ENCODE measurements at regions of chr12 and their contacts with region 1.

Region 1: GRCh38 chr12:108664338-108665258 is 30.9 kb upstream of the SELPLG start:
- DNase-seq: peak; percentile 93
- ATAC-seq: peak; percentile 100
- H3K4me3 Mint-ChIP-seq: no peak overlapping the region
- H3K27ac Mint-ChIP-seq: peak overlapping the region; percentile 82
- H3K4me1 Mint-ChIP-seq: peaks cover 19% of the 10 kb centered on the region
- H3K27me3 Mint-ChIP-seq: no peaks in the 10 kb centered on the region

Region 2: DNA sequence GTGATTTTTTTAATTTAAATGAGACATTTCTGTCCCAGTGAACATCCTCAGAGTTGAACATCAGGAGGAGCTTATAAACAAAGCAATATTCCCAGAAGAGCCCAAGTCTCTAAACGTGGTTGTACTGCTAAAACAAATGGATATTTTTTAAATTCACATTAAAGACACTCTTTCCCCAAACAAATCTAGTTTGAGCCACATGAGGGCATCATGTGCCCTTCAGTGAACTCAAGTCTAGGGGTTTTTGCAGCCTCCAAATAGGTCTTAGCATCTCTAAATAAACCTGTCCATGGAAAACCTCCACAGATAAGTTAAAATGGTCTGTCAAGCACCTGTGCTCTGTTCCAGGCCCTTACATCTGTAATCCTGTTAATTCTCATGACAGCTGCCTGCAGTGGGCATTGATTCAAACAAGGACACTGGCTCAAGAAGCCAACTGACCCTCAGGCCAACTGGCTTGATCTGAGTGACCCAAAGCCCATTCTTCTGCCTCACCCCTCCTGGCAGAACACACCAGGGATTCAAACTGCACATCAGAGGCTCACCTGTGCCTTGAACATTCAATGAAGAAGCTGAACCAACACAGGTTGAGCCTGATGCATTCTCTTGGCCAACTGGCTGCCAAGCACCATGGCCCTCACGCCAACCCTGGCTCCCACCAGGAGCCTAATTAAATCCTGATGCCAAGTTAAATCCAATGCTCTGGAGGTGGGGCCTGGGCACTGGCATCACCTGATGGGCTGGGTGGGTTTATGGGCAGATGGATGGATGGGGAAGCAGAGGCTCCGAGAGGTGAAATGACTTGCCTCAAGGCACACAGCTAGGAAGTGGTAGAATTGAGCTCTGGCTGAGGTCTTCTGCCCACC is 93.6 kb before region 1 on chr12:
- CTCF ChIA-PET with region 1: interaction called, 18 read pairs
- DNase-seq: no peak
- ATAC-seq: no peak
- H3K4me3 Mint-ChIP-seq: no peak overlapping the region
- H3K27ac Mint-ChIP-seq: no peak overlapping the region
- H3K4me1 Mint-ChIP-seq: peaks cover 85% of the 10 kb centered on the region
- H3K27me3 Mint-ChIP-seq: peaks cover 3% of the 10 kb centered on the region

Region 3: DNA sequence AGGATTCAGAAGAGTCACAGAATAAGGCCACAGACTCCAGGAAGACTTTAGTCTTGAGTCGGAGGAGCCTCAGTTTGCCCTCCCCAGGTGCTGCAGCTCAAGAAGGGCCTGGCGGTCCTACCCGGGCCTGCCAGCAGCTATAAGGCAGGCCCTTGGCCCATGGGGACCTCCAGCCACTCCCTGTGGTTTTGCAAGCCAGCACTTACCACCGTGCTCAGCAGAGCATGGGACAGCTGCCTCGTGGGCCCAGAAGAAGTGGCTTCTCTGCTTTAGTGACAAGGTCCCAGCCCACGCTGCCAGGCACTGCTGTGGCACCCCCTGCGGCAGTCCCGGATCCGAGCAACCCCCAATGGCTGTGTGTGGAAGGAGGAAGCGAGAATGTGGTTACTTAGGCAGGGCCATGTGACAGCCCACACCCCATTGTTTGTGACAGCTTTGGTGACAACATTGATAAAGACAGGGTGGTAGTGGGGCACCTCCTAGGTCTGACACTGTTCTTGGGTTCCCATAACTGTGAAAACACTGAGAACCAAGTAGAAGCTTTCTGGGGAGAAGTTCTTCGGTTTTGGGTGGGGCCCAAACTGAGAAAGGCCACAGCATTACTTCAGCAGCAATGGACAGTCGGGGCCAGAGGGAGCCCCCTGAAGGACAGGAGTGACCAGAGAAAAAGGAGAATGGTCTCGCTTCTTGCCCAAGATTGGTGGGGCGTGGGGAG is 30.9 kb before region 1 on chr12 and contains the start of gene SELPLG:
- CTCF ChIA-PET with region 1: interaction called, 37 read pairs
- DNase-seq: peak; percentile 95
- ATAC-seq: peak; percentile 53
- H3K4me3 Mint-ChIP-seq: peak within 1 kb of the TSS; percentile 100
- H3K27ac Mint-ChIP-seq: peak within 1 kb of the TSS; percentile 100
- H3K4me1 Mint-ChIP-seq: peaks cover 59% of the 10 kb centered on the region
- H3K27me3 Mint-ChIP-seq: no peaks in the 10 kb centered on the region
- total RNA-seq, gene SELPLG: 148 to 184 TPM

Region 4: DNA sequence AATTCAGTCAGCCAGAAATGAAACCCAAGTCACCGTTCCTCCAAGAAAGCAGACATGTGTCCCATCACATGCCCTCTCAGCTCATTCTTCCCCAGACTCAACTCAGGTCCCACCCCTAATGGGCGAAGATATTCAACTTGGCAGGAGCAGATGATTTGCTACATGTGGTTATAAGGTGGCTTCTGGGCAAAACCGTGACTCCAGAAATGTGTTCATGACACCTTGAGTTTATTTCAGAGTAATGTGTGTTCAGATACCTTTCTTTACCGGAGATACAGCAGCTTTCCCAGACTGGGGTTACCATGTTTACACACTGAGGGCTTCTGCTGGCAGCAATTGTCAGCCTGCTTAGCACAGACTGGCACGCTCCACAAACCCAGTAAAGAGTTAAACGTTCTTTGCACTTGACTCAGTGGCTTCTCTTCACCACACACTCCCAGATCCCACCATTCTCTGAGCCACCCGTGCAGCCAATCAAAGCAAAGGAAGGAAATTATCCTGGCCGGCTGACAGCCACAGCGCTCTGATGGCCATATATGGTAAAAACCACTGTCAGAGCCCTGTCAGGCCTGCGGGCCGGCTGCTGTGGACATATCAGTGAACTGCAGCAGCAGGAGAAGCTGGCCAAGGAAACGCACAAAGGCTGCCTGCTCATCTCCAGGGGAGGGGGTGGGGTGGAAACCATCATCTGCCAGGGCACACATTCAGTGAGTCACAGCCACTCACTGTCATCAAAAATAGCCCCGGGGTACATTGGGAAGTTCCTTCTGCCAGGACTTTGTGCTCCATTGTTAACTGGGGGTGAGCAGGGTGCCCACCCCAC is 26.8 kb after region 1 on chr12:
- CTCF ChIA-PET with region 1: interaction called, 27 read pairs
- DNase-seq: peak; percentile 91
- ATAC-seq: peak; percentile 83
- H3K4me3 Mint-ChIP-seq: peak overlapping the region; percentile 68
- H3K27ac Mint-ChIP-seq: peak overlapping the region; percentile 90
- H3K4me1 Mint-ChIP-seq: peaks cover 68% of the 10 kb centered on the region
- H3K27me3 Mint-ChIP-seq: no peaks in the 10 kb centered on the region

Region 5: DNA sequence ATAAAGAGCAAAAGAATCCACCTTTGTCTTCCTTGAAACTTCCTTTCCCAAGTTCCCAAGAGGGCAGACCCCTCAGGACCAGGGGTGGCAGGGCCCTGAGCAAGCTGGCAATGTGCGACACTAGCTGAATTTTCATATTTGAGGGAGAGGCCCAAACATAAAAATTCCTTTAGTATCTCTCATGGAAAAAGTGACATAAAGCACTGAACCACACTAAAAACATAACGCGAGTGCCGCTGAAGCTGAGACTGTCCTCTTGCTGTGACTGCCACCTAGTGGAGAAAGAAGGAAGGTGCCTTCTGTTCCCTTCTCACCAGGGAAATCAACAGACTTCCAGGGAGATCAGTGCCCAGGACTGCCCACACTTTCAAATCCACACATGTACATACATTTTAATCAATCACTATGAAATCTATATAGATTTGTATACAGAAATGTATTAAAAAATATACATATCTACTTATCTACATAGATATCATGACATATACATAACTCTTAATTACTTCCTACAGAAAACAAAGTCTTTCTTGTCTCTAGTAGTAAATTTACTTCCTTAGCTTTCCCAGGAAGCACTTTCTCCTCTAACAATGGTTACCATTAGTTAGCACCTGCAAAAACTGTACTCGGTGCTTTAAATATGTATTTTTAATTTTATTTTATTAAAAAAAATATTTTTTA is 139.0 kb after region 1 on chr12:
- CTCF ChIA-PET with region 1: interaction called, 203 read pairs
- DNase-seq: peak; percentile 77
- ATAC-seq: peak; percentile 91
- H3K4me3 Mint-ChIP-seq: no peak overlapping the region
- H3K27ac Mint-ChIP-seq: peak overlapping the region; percentile 36
- H3K4me1 Mint-ChIP-seq: peaks cover 16% of the 10 kb centered on the region
- H3K27me3 Mint-ChIP-seq: no peaks in the 10 kb centered on the region

Measured in activated CD8-positive, alpha-beta memory T cell treated with anti-CD3 and anti-CD28 coated beads, Interleukin-2, amount 10 ng/mL, durations not matched to agents 7 days and 5 days (primary cell).